Transverse colon (tissue), 4 donors: ENCODE measurements at regions of chr22 and their contacts with region 1.

Region 1: GRCh38 chr22:24951942-24952836 is at the start of gene KIAA1671:
- DNase-seq: peak; percentile 91
- H3K4me3 ChIP-seq: peak within 1 kb of the TSS; percentile 55 to 69 (median 66)
- H3K27ac ChIP-seq: peak within 1 kb of the TSS; percentile 84 to 92 (median 90)
- H3K4me1 ChIP-seq: peaks cover 0 to 26% (median 20%) of the 10 kb centered on the region in 4 donors
- H3K27me3 ChIP-seq: peaks cover 8% of the 10 kb centered on the region
- CTCF ChIP-seq: peak; percentile 97 to 99 (median 98)
- EP300 ChIP-seq: no peak
- POLR2A ChIP-seq: no peak
- total RNA-seq, gene KIAA1671: 83.1 to 162 (median 105) TPM

Region 2: GRCh38 chr22:24845041-24845898 is 106.9 kb before region 1 on chr22:
- in situ Hi-C with region 1: no loop called
- intact Hi-C with region 1: no loop called
- DNase-seq: no peak
- H3K4me3 ChIP-seq: no peak overlapping the region
- H3K27ac ChIP-seq: no peak overlapping the region
- H3K4me1 ChIP-seq: peaks cover 0 to 7% (median 1%) of the 10 kb centered on the region in 4 donors
- H3K27me3 ChIP-seq: no peaks in the 10 kb centered on the region
- CTCF ChIP-seq: no peak
- EP300 ChIP-seq: no peak
- POLR2A ChIP-seq: no peak

Region 3: GRCh38 chr22:25048659-25049647 is 96.8 kb after region 1 on chr22:
- in situ Hi-C with region 1: loop called in 3 of 4 experiments (anchors 5 to 10 kb)
- intact Hi-C with region 1: loop called (anchors 2 kb)
- DNase-seq: peak; percentile 78
- H3K4me3 ChIP-seq: no peak overlapping the region
- H3K27ac ChIP-seq: peak overlapping the region in 1 of 4 donors; percentile 7
- H3K4me1 ChIP-seq: peaks cover 0 to 25% (median 9%) of the 10 kb centered on the region in 4 donors
- H3K27me3 ChIP-seq: no peaks in the 10 kb centered on the region
- CTCF ChIP-seq: peak; percentile 84 to 90 (median 88)
- EP300 ChIP-seq: no peak
- POLR2A ChIP-seq: no peak

Region 4: GRCh38 chr22:25057013-25057881 is 105.1 kb after region 1 on chr22:
- in situ Hi-C with region 1: loop called in 1 of 4 experiments (anchors 5 kb)
- intact Hi-C with region 1: no loop called
- DNase-seq: peak; percentile 82
- H3K4me3 ChIP-seq: no peak overlapping the region
- H3K27ac ChIP-seq: no peak overlapping the region
- H3K4me1 ChIP-seq: peaks cover 0 to 25% (median 6%) of the 10 kb centered on the region in 4 donors
- H3K27me3 ChIP-seq: no peaks in the 10 kb centered on the region
- CTCF ChIP-seq: peak; percentile 80 to 93 (median 84)
- EP300 ChIP-seq: no peak
- POLR2A ChIP-seq: no peak